Mammary epithelial cell (primary cell): ENCODE measurements at regions of chr11 and their contacts with region 1.

Region 1: GRCh38 chr11:65069912-65070311 is 11.6 kb upstream of the NAALADL1 start:
- DNase-seq: no peak
- H3K4me3 ChIP-seq: no peak overlapping the region
- H3K27ac ChIP-seq: no peak overlapping the region
- H3K4me1 ChIP-seq: no peaks in the 10 kb centered on the region
- H3K27me3 ChIP-seq: no peaks in the 10 kb centered on the region
- CTCF ChIP-seq: no peak

Region 2: DNA sequence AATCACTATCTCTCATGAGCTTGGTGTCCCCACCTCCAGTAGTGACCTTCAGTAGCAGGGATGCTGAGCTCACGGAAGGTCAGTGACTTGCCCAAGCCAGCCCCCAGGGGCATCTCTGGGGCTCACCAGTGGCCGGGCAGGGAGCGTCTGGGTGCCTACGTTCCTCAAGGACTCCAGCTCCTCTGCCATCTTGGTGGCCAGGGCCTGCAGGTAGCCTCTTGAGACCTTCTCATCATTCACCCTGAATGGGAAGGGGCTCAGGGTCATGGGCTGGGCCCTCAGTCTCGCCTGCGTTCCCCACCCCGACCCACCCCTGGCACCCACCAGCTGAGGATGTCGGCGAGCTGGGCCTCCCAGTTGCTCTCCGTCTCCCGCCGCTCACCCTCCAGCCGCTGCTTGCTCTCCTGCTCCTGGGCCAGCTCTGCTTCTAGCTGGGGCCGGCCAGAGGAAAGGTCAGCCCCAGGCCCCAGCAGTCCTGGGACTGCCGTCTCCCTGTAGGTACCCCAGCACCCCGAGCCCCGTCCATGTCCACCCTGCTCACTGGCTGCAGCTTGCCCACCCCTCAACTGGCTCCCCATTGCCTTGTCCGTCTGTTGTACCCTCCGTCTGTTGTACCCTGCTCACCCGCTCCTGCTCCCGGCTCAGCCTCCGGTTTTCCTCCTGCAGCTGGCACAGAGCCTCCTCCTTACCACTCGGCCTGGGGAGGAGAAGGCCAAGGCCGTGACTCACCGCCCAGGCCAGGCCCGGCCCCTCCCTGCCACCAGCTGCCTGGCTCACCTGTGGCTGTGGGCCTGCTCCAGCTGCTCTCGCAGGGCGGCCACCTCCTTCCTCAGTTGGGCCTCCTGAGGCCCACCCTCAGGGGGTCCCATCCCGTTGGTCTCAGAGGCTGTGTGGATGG is 234.9 kb before region 1 on chr11:
- CTCF ChIA-PET with region 1: no interaction called
- dilution Hi-C with region 1: no loop called
- in situ Hi-C with region 1: no loop called
- intact Hi-C with region 1: no loop called
- DNase-seq: peak; percentile 85
- H3K4me3 ChIP-seq: no peak overlapping the region
- H3K27ac ChIP-seq: no peak overlapping the region
- H3K4me1 ChIP-seq: peaks cover 19% of the 10 kb centered on the region
- H3K27me3 ChIP-seq: no peaks in the 10 kb centered on the region
- CTCF ChIP-seq: no peak

Region 3: GRCh38 chr11:64868904-64869570 is 200.9 kb before region 1 on chr11:
- CTCF ChIA-PET with region 1: interaction called, 12 read pairs
- dilution Hi-C with region 1: no loop called
- in situ Hi-C with region 1: no loop called
- intact Hi-C with region 1: no loop called
- DNase-seq: peak; percentile 96
- H3K4me3 ChIP-seq: no peak overlapping the region
- H3K27ac ChIP-seq: peak overlapping the region; percentile 72
- H3K4me1 ChIP-seq: peaks cover 68% of the 10 kb centered on the region
- H3K27me3 ChIP-seq: no peaks in the 10 kb centered on the region
- CTCF ChIP-seq: no peak

Region 4: DNA sequence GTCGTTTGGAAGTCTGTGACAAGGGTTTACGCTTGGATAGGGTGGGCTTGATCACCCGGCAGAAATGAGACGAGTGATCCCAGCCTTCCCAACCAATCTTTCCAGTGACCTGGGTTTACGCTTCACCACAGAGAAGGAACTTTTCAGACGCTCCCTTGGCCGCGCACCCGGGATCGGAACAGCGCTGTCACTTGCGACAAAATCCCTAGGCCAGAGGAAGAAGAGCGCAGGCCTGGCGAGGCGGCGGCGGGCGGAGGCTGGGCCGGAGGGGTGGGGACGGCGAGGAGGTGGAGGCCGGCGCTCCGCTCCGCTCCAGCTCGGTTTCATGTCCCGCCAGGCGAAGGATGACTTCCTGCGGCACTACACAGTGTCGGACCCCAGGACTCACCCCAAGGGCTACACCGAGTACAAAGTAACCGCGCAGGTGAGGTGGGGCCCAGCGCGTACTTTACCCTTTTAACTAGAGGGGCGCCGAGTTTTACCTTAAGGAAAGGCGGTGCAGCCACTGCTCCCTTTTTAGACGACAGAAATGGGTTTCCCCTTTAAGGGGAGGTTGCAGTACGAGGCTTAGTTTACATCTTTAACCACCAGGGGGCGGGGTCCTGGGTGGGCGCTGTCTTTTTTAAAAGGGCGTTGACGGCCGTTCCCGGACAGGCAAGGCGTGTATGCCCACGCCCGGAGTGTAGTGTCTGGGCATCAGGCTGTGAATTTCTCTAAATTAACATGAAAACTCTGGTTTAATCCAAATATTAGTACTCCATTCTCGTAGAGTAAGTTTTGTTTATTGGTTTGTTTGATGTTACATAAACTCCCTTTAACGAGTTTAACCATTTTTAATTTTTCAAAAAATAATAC is 42.5 kb before region 1 on chr11 and contains the start of gene SNX15:
- CTCF ChIA-PET with region 1: no interaction called
- dilution Hi-C with region 1: no loop called
- in situ Hi-C with region 1: no loop called
- intact Hi-C with region 1: no loop called
- DNase-seq: peak; percentile 96
- H3K4me3 ChIP-seq: peak within 1 kb of the TSS; percentile 54 to 80 (median 72)
- H3K27ac ChIP-seq: peak within 1 kb of the TSS; percentile 41
- H3K4me1 ChIP-seq: peaks cover 11% of the 10 kb centered on the region
- H3K27me3 ChIP-seq: no peaks in the 10 kb centered on the region
- CTCF ChIP-seq: peak; percentile 34 to 66
- total RNA-seq, gene SNX15: 12.3 to 19.7 TPM